Activated CD4-positive, alpha-beta T cell treated with anti-CD3 and anti-CD28 coated beads for 36 hours (primary cell): ENCODE measurements at regions of chrX and their contacts with region 1.

Region 1: GRCh38 chrX:20382518-20383297 is 116.0 kb upstream of the RPS6KA3 start:
- DNase-seq: peak; percentile 49
- ATAC-seq: peak; percentile 59
- H3K4me3 Mint-ChIP-seq: no peak overlapping the region
- H3K27ac Mint-ChIP-seq: no peak overlapping the region
- H3K4me1 Mint-ChIP-seq: peaks cover 22% of the 10 kb centered on the region
- H3K27me3 Mint-ChIP-seq: no peaks in the 10 kb centered on the region

Region 2: GRCh38 chrX:20181598-20182329 is 200.9 kb before region 1 on chrX:
- CTCF ChIA-PET with region 1: no interaction called
- POLR2A ChIA-PET with region 1: no interaction called
- intact Hi-C with region 1: loop called in 1 of 2 experiments (anchors 1 kb)
- DNase-seq: no peak
- ATAC-seq: peak; percentile 92
- H3K4me3 Mint-ChIP-seq: no peak overlapping the region
- H3K27ac Mint-ChIP-seq: peak overlapping the region; percentile 75
- H3K4me1 Mint-ChIP-seq: peaks cover 16% of the 10 kb centered on the region
- H3K27me3 Mint-ChIP-seq: no peaks in the 10 kb centered on the region

Region 3: GRCh38 chrX:20224814-20225487 is 157.8 kb before region 1 on chrX:
- CTCF ChIA-PET with region 1: no interaction called
- POLR2A ChIA-PET with region 1: no interaction called
- intact Hi-C with region 1: loop called in 1 of 2 experiments (anchors 1 kb)
- DNase-seq: peak; percentile 16
- ATAC-seq: peak; percentile 96
- H3K4me3 Mint-ChIP-seq: no peak overlapping the region
- H3K27ac Mint-ChIP-seq: peak overlapping the region; percentile 55
- H3K4me1 Mint-ChIP-seq: peaks cover 42% of the 10 kb centered on the region
- H3K27me3 Mint-ChIP-seq: no peaks in the 10 kb centered on the region

Region 4: DNA sequence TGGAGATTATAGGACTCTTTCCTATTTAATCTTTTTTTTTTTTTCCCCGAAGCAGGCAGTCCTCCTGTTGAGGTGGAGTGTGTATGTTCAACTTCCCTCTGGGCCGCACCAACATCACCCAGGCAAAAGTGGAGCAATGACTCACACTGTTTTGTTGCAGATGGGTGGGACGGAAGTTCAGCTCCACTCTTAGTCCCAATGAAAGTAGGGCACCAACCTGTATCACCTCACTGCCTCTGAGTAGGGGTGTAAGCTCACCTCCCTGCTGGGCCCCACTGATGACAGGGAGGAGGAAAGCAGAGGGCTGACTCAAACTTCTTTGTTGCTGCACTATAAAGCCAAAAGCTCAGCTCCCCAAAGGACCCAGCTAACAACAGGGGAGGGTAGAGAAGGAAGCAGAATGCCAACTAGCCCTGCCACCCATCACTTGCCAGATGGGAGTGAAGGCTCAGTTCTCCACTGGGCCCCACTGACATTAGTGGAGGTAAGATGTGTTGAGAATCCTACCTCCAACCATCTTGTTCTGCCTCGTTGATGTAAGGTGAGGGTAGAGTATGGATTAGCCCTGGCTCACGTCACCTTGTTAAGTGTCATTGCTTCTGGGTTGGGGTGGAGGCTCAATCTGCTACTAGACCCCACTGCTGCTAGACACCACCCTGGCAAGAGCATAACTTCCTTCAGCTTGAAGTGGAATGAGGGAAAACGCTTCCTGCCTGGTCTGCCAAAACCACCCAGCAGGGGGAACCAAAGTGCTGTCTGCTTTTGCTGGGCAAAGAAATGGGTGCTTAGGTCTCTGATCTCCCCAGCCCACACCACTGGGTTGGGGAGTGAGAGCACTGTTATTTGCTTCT is 130.1 kb before region 1 on chrX:
- CTCF ChIA-PET with region 1: interaction called, 4 read pairs
- POLR2A ChIA-PET with region 1: no interaction called
- intact Hi-C with region 1: loop called in 1 of 2 experiments (anchors 2 kb)
- DNase-seq: peak; percentile 76
- ATAC-seq: peak; percentile 90
- H3K4me3 Mint-ChIP-seq: no peak overlapping the region
- H3K27ac Mint-ChIP-seq: peak overlapping the region; percentile 78
- H3K4me1 Mint-ChIP-seq: peaks cover 47% of the 10 kb centered on the region
- H3K27me3 Mint-ChIP-seq: no peaks in the 10 kb centered on the region

Region 5: GRCh38 chrX:20266810-20267606 is 115.7 kb before region 1 on chrX and contains the start of gene RPS6KA3:
- CTCF ChIA-PET with region 1: no interaction called
- POLR2A ChIA-PET with region 1: interaction called, 3 read pairs
- intact Hi-C with region 1: loop called in 1 of 2 experiments (anchors 1 kb)
- DNase-seq: peak; percentile 94
- ATAC-seq: peak; percentile 83
- H3K4me3 Mint-ChIP-seq: peak within 1 kb of the TSS; percentile 82
- H3K27ac Mint-ChIP-seq: peak within 1 kb of the TSS; percentile 91
- H3K4me1 Mint-ChIP-seq: peaks cover 18% of the 10 kb centered on the region
- H3K27me3 Mint-ChIP-seq: no peaks in the 10 kb centered on the region
- total RNA-seq, gene RPS6KA3: 40.7 to 41.5 TPM

Region 6: DNA sequence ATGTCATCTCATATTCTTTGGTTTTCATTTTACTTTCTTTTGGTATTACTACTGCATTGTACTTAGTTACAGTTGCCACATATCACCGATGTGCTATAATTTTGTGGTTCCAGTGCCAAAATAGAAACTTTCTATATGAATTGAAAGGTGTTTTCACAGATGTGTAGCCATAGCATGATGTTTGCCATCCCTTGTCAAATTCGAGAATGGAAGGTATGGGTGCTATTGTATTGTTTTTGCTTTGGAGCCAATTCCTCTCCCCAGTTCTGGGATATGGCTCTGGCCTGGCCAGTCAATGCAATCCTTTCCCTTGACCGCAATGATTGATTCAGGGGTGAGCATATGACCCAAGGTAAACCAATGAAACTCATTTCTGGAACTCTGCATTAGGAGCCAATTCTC is 29.8 kb before region 1 on chrX:
- CTCF ChIA-PET with region 1: no interaction called
- POLR2A ChIA-PET with region 1: interaction called, 3 read pairs
- intact Hi-C with region 1: loop called (anchors 1 kb)
- DNase-seq: peak; percentile 8
- ATAC-seq: peak; percentile 72
- H3K4me3 Mint-ChIP-seq: no peak overlapping the region
- H3K27ac Mint-ChIP-seq: no peak overlapping the region
- H3K4me1 Mint-ChIP-seq: peaks cover 26% of the 10 kb centered on the region
- H3K27me3 Mint-ChIP-seq: peaks cover 4% of the 10 kb centered on the region

Region 7: GRCh38 chrX:20442597-20442996 is 59.9 kb after region 1 on chrX:
- CTCF ChIA-PET with region 1: no interaction called
- POLR2A ChIA-PET with region 1: no interaction called
- intact Hi-C with region 1: loop called (anchors 2 to 10 kb)
- DNase-seq: peak; percentile 91
- ATAC-seq: peak; percentile 87
- H3K4me3 Mint-ChIP-seq: no peak overlapping the region
- H3K27ac Mint-ChIP-seq: no peak overlapping the region
- H3K4me1 Mint-ChIP-seq: peaks cover 44% of the 10 kb centered on the region
- H3K27me3 Mint-ChIP-seq: no peaks in the 10 kb centered on the region